ENCODE measurements at regions of chr5 and their contacts with region 1.

Region 1: GRCh38 chr5:139513852-139514485 is 31.4 kb upstream of the STING1 start:
- DNase-seq: no peak
- ATAC-seq: no peak
- H3K4me3 ChIP-seq: no peak overlapping the region
- H3K27ac ChIP-seq: no peak overlapping the region
- H3K4me1 ChIP-seq: no peaks in the 10 kb centered on the region
- H3K27me3 ChIP-seq: no peaks in the 10 kb centered on the region
- CTCF ChIP-seq: no peak

Region 2: DNA sequence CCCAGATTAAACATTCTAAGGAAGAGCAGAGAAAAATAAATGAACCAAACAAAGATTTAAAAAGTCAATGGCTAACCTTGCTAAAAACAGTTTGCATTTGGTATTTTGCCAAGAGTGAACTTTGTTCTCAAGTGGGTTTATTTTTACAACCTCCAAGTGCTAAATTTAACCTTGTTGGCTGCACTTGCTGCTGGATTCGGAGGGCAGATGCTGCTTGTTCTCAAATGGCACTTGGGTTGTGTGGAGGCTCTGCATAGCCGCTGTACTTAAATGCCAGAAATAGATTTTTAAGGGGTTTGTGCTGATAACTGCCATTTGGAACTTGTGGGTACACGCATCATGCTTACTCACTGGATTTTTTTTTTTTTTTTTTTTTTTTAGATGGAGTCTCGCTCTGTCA is 96.8 kb before region 1 on chr5:
- intact Hi-C with region 1: loop called in 2 of 3 experiments (anchors 5 kb)
- DNase-seq: no peak
- ATAC-seq: peak in 2 of 4 donors; percentile 38 to 39
- H3K4me3 ChIP-seq: no peak overlapping the region
- H3K27ac ChIP-seq: no peak overlapping the region
- H3K4me1 ChIP-seq: no peaks in the 10 kb centered on the region
- H3K27me3 ChIP-seq: no peaks in the 10 kb centered on the region
- CTCF ChIP-seq: no peak

Region 3: DNA sequence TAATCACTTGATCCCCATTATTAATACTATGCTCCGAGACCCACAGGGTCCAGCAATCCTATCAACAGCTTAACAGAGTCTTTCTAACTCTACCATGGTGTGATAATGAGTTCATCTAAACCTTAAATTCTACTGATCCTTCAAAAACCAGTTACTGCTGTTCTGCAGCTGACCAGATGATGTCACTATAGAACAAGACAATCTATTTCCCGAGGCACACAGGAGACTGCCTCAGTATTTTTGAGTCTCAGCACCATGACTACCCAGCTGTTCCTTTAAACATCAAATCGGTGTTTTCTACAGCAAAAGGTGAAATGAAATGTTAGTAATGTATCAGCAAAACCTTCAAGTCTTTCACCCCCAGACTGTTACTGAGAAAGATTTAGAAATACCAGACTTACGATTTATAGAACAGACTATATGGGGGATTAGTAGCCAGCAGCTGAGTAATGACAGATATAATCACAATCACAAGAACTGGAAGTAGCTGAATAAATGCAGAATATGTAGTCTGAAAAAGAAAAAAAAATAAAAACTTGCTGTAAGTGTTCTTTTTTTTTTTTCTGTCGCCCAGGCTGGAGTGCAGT is 91.6 kb before region 1 on chr5:
- intact Hi-C with region 1: loop called in 2 of 3 experiments (anchors 5 kb)
- DNase-seq: peak in 2 of 6 donors; percentile 31 to 58
- ATAC-seq: peak; percentile 86 to 98 (median 94)
- H3K4me3 ChIP-seq: no peak overlapping the region
- H3K27ac ChIP-seq: no peak overlapping the region
- H3K4me1 ChIP-seq: no peaks in the 10 kb centered on the region
- H3K27me3 ChIP-seq: no peaks in the 10 kb centered on the region
- CTCF ChIP-seq: peak; percentile 20 to 59 (median 56)